ENCODE measurements at regions of chr2 and their contacts with region 1.

Region 1: DNA sequence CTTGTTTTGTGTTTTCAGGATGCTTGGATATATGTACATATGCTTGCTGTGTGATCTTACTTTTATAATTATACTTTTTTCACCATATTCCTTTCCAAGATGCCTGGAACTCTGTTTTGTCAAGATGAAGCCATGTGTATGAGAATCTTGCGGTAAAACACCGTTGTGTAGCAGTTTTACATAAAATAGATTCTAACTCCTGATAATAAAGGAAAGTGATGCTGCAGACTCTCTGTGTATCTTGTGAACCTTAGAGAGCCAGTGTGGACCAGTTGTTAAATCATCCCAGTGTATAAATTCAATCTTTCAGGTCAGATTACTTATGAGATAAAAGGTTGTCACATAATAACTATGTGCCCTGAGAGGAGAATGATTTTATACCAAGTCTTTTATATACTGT is 12.5 kb upstream of the ITGA4 start:
- DNase-seq: no peak
- H3K4me3 ChIP-seq: no peak overlapping the region
- H3K27me3 ChIP-seq: no peaks in the 10 kb centered on the region
- CTCF ChIP-seq: no peak

Region 2: DNA sequence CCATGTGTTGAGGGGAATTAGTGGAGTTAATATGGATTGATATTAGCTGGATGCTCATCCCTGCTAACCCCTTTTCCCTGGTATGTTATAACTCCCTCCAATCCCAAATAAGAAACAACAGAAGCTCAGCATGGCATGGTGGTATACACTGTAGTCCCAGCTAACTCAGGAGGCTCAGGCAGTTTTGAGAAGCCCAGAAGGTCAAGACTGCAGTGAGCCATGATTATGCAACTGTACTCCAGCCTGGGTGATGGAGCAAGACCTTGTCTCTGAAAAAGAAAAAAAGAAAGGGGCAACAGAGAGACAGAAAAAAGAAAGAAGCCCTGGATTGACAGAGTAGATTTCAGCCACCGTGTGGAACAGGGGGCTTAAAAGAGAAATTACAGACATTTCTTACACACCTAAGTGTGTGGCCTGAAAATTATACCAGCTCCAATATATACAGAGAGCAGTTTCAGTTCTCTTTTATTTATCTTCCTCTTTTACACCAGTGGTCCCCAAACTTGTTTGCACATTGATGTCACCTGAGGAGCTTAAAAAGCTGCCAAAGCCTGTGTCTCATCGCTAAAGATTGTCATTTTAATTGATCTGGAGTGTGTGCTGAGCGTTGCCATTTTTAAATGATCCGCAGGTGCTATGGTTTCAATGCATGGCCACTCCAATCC is 260.6 kb before region 1 on chr2:
- CTCF ChIA-PET with region 1: no interaction called
- POLR2A ChIA-PET with region 1: no interaction called
- DNase-seq: no peak
- H3K4me3 ChIP-seq: no peak overlapping the region
- H3K27me3 ChIP-seq: no peaks in the 10 kb centered on the region
- CTCF ChIP-seq: no peak

Region 3: GRCh38 chr2:181457121-181457740 is 12.6 kb after region 1 on chr2 and contains the start of gene ITGA4:
- CTCF ChIA-PET with region 1: interaction called, 10 read pairs
- POLR2A ChIA-PET with region 1: no interaction called
- DNase-seq: no peak
- H3K4me3 ChIP-seq: peak within 1 kb of the TSS; percentile 69
- H3K27me3 ChIP-seq: no peaks in the 10 kb centered on the region
- CTCF ChIP-seq: peak; percentile 72
- polyA plus RNA-seq, gene ITGA4: 17.6 and 37.3 TPM in 2 replicates

Measured in BJ (cell line).